ENCODE measurements at regions of chr2 and their contacts with region 1.

Region 1: DNA sequence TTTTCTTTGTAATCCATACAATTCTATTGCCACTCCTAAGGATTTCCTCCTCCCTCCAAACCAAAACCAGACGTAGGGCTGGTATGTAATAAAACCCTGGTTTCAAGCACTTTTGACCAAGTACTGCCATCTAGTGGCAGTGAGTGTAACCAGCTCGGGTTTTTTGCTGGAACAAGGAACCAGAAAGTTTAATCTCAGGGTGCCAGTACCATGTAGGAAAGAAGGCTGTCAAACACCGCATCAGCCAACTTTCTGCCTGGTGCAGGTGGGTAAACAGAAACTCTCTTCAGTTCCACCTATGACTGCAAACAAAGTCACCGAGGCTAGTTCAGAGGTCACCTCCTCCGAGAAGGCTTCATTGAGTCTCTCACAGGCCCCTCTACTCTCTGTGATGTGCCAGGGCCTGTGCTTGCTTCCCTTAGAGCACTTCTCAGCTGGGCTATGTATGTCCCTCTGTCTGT is 10.2 kb upstream of the THNSL2 start:
- DNase-seq: no peak
- ATAC-seq: peak; percentile 41 to 54

Region 2: DNA sequence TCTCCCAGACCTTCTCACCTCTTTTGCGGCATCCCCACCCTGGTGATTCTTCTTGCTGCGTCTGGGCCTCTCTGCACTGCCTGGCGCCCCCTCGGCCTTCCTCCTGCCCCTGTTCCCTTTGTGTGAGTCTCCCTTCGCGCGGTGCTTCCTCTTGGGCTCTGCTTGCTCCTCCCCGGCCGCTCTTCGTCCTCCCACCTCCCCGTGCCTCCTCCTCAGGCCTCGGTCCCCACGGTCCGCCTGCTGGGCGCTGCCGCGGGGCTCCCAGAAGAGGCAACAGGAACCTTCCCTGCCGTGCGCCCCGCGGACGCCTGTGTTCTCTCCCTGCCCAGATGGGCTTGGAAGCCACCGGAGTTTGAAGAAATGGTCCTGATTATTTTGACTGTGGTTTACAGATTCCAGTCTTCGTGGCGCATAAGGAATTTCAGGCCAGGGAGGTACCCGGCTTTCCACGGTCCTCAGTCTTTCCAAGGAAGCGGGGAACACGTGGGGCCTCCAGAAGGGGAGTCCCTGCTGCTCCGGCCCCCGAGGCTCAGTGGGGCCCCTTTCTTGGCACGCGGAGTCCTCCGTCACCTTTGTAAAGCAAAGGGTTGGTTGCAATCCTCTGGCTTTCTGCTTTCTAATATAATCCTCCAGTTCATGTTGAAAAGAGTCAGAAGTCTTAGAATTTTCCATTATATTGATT is 156.8 kb before region 1 on chr2:
- intact Hi-C with region 1: loop called in 1 of 2 experiments (anchors 5 kb)
- DNase-seq: no peak
- ATAC-seq: no peak

Region 3: DNA sequence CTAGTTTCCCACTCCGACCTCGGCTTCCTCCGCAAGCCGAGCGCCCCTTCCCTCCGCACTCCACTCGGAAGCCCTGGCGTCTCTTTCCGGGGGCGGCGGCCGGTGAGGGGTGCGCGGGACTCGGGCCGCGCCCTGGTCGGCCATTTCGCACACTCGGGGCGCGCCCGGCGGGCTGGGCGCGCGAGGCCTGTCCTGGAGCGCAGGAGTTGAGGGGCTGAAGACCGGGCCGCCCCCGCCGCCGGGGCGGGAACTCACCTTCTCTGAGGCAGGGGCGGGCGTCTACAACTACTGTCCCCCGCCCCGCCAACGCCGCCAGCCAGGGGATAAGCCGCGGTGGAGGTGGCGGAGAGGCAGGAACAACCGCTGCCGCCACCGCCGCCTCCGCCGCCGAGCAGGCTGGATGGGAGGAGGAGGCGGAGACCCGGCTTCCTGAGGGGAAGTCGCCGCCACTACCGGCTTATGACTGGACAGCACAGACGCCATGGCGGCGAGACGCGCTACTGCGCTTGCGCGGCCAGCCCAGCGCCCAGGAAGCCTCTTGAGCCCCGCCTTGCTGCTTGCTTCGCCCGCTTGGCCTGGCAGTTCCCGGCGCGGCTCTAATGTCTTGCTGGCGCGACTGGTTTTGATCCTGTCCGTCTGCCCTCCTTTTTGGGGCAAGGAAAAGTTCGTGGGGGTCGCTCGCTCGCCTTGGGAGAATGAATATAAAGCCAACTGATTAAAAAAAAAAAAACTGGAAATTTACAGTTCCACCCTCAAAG is 104.4 kb before region 1 on chr2 and contains the start of gene KRCC1:
- intact Hi-C with region 1: loop called (anchors 2 to 5 kb)
- DNase-seq: peak; percentile 96
- ATAC-seq: peak; percentile 98
- total RNA-seq, gene KRCC1: 20.5 to 21.5 TPM

Region 4: GRCh38 chr2:88209521-88210131 is 49.6 kb after region 1 on chr2:
- intact Hi-C with region 1: no loop called
- DNase-seq: no peak
- ATAC-seq: peak in 1 of 2 donors; percentile 54

Region 5: DNA sequence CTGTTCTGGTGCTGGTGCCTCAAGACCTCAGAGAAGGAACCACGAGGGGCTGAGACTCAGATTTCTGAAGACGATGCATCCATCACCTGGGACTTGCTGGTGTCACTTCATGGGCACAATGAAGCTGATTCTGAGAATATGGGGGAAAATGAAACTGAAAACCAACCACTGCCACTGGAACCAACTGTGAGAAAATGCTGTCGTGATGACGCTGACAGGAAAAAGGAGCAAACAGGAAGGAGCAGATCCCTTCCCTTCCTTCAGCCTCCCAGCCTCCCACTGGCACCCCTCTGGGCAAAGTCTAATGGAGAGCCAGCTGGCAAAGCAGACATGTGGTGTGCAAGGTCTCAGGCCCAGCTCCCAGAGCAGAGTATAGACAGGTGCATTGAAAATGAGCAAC is 182.8 kb after region 1 on chr2:
- intact Hi-C with region 1: no loop called
- DNase-seq: no peak
- ATAC-seq: no peak

Region 6: GRCh38 chr2:88377641-88377991 is 217.6 kb after region 1 on chr2:
- intact Hi-C with region 1: no loop called
- DNase-seq: no peak
- ATAC-seq: no peak

Measured in left cardiac atrium (tissue), 4 donors.